HepG2 (cell line): ENCODE measurements at regions of chr9 and their contacts with region 1.

Region 1: GRCh38 chr9:137459147-137459600 is at the start of gene NSMF:
- DNase-seq: peak; percentile 77
- ATAC-seq: peak; percentile 24
- H3K4me3 ChIP-seq: peak within 1 kb of the TSS; percentile 68 to 95 (median 95)
- H3K27ac ChIP-seq: peak within 1 kb of the TSS; percentile 99
- H3K4me1 ChIP-seq: peaks cover 81% of the 10 kb centered on the region
- H3K27me3 ChIP-seq: no peaks in the 10 kb centered on the region
- CTCF ChIP-seq: no peak
- EP300 ChIP-seq: 0 out of 4 replicates have a peak, but pooled peaks of 1 of the 2 experiments have one; percentile 1
- POLR2A ChIP-seq: peak in 1 of 2 experiments; percentile 51; a peak in 1 of 4 replicates
- RAD21 ChIP-seq: no peak; the same call in 1 of the 2 replicates
- total RNA-seq, gene NSMF: 38.3 and 44.3 TPM in 2 replicates

Region 2: DNA sequence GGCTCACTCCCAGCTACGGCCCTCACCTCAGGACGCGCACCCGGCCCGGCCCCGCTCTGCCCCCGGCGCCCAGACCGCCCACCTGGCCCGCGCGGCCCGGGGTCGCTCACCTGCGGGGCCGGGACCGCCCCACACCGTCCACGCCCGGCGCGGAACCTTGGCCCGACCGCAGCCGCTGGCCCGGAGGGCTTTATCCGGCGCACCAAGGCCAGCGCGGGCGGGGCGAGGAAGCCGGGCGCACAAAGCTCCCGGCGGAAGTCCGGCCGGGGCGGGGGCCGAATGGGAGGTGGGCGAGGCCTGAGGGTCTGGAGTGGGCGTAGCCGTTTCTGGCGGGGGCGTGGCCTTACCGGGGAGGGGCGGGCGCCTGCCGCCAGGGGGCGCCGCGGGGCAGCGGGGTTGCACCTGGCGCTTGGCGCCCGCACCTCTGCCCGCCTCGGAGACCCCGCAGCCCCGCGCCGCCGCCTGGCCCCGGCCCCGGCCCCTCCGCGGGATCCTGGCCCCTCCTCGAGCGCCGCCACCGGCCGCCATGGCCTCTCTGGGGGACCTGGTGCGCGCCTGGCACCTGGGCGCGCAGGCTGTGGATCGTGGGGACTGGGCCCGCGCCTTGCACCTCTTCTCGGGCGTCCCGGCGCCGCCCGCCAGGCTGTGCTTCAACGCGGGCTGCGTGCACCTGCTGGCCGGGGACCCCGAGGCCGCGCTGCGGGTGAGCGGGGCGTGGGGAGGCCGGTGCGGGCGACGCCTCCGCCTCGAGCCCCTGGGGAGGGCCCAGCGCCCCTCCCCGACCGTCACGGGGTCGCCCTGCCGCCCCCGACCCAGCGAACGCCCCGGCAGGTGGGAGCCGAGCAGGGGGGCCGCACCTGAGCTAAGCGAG is 35.9 kb before region 1 on chr9 and contains the starts of genes EXD3 and NOXA1:
- CTCF ChIA-PET with region 1: no interaction called
- POLR2A ChIA-PET with region 1: interaction called, 12 read pairs
- in situ Hi-C with region 1: no loop called
- intact Hi-C with region 1: no loop called
- DNase-seq: peak; percentile 81
- ATAC-seq: peak; percentile 81
- H3K4me3 ChIP-seq: peak within 1 kb of the TSS; percentile 69 to 99 (median 96)
- H3K27ac ChIP-seq: peak within 1 kb of the TSS; percentile 69
- H3K4me1 ChIP-seq: peaks cover 21% of the 10 kb centered on the region
- H3K27me3 ChIP-seq: no peaks in the 10 kb centered on the region; a peak in 1 of 5 replicates
- CTCF ChIP-seq: peak; percentile 71
- EP300 ChIP-seq: no peak; a peak in 1 of 4 replicates
- POLR2A ChIP-seq: no peak
- RAD21 ChIP-seq: peak; percentile 87
- total RNA-seq, gene EXD3: 1.3 and 2.7 TPM in 2 replicates
- total RNA-seq, gene NOXA1: 0.63 and 1.2 TPM in 2 replicates

Region 3: DNA sequence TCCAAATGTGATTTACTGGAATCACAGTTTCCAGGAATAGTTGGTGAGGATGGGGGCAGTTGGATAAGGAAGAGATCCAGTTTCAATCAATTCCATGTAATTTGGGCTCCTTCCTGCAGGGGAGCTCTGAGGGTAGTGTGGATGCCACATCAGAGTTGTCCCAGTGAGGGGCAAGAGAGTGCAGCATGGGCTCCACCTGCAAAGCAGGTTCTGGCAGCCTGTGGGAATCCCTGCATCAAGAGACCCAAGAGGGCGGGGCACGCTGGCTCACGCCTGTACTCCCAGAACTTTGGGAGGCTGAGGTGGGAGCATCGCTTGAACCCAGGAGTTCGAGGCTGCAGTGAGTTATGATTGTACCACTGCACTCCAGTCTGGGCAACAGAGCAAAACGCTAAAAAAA is 606.9 kb after region 1 on chr9:
- CTCF ChIA-PET with region 1: no interaction called
- POLR2A ChIA-PET with region 1: no interaction called
- in situ Hi-C with region 1: no loop called
- intact Hi-C with region 1: no loop called
- DNase-seq: no peak
- ATAC-seq: 0 out of 3 replicates have a peak, but pooled peaks have one; percentile 37
- H3K4me3 ChIP-seq: no peak overlapping the region
- H3K27ac ChIP-seq: no peak overlapping the region
- H3K4me1 ChIP-seq: no peaks in the 10 kb centered on the region
- H3K27me3 ChIP-seq: peaks cover 2 to 40% of the 10 kb centered on the region in 2 experiments
- CTCF ChIP-seq: no peak
- EP300 ChIP-seq: no peak
- POLR2A ChIP-seq: no peak
- RAD21 ChIP-seq: no peak

Region 4: DNA sequence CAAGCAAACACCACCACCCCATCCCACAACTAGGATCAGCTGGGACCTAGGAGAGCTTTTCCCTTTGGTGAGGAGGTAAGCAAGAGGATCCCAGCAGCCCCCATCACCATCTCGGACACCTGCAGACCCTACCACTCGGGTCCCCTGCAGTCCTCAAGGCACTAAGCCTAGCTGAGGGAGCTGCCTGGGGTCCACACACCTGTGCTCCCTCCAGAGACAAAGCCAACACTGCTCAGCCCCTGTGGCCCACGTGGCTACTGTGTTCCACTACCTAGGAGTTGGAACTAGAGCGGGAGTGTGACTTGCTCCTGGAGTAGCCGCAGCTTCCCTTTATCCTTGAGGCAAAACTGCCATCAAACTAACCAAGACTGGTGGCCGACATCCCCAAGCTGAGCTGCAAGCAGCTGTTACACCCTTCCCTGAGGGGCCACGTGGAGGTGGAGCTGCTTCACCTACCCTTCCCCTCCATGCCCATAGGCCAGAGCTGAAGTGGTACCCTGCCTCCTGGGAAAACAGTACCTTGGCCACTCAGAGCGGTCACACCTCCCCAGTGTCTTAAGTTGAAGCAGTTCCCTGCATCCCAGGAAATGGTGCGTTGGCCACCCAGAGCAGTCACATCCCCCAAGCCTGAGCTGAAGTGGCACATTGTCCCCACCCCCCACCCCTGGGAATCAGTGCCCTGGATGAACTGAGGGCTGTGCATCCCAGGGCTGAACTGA is 623.9 kb after region 1 on chr9:
- CTCF ChIA-PET with region 1: no interaction called
- POLR2A ChIA-PET with region 1: no interaction called
- in situ Hi-C with region 1: no loop called
- intact Hi-C with region 1: no loop called
- DNase-seq: no peak
- ATAC-seq: no peak
- H3K4me3 ChIP-seq: no peak overlapping the region
- H3K27ac ChIP-seq: no peak overlapping the region
- H3K4me1 ChIP-seq: no peaks in the 10 kb centered on the region
- H3K27me3 ChIP-seq: peaks cover 2 to 24% of the 10 kb centered on the region in 2 experiments; a peak in 2 of 5 replicates
- CTCF ChIP-seq: no peak
- EP300 ChIP-seq: no peak
- POLR2A ChIP-seq: no peak
- RAD21 ChIP-seq: no peak